ENCODE measurements at regions of chr16 and their contacts with region 1.

Region 1: DNA sequence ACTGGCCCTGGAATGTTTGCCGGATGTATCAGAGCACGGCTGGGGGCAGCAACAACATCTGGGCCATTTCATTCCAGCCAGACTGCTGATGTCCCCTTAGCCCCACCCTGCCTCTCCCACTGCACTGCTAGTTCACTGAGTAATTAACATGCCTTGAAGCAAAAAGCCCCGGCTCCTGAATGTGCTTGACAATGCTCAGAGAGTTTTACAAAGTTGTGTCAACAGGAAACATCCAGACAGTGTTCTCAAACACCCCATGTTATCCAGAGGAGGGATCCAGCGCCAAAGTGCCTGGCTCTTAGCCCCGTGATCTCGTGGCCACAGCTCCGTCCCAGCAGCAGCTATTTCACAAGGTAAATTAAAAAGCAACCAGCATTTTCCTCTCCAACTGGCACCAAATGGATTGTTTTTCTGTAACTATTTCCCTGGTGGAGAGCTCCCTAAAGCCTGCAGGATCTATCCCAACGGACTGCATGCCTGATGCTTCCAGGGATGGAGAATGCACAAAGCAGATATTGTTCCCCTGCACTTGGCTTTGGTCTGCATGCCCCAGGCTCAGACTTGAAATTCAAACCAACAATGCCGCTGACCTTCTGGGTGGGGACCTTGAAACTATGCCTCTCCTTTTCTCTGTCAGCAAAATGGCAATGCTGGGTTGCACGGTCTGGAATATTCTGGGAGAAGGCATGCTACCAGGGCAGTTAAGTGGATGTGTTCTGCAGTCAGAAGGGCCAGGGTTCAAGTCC is 115.6 kb upstream of the CDH5 start:
- DNase-seq: peak; percentile 72 to 87
- H3K4me3 ChIP-seq: peak overlapping the region in 1 of 3 donors; percentile 31
- H3K27ac ChIP-seq: peak overlapping the region; percentile 79 to 88
- H3K4me1 ChIP-seq: peaks cover 4 to 10% of the 10 kb centered on the region in 2 donors
- H3K27me3 ChIP-seq: no peaks in the 10 kb centered on the region
- CTCF ChIP-seq: peak in 1 of 3 donors; percentile 24
- POLR2A ChIP-seq: no peak

Region 2: DNA sequence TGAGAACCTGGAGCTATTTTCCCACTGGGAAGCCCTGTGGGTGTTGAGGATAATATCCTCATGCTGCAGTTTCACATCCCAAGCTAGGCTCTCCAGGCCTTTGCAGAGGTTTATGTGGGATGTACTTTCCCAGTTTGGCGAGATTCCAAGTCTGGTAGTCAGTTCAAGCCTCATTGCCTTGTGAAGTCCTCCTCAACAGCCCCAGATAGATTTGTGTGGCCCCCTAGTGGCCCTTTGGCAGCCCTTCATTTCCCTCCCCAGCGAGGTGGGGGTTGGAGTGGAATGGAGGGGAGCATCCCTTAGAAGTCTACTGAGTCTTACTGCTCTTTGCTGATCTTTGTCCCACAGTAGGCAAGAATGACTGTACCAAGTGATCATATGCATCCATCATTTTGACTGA is 1266.9 kb before region 1 on chr16:
- intact Hi-C with region 1: loop called (anchors 5 kb)
- DNase-seq: no peak
- H3K4me3 ChIP-seq: no peak overlapping the region
- H3K27ac ChIP-seq: peak overlapping the region in 1 of 2 donors; percentile 20
- H3K4me1 ChIP-seq: no peaks in the 10 kb centered on the region
- H3K27me3 ChIP-seq: no peaks in the 10 kb centered on the region
- CTCF ChIP-seq: peak in 1 of 3 donors; percentile 7
- POLR2A ChIP-seq: no peak